Transverse colon (tissue), 4 donors: ENCODE measurements at regions of chr3 and their contacts with region 1.

Region 1: DNA sequence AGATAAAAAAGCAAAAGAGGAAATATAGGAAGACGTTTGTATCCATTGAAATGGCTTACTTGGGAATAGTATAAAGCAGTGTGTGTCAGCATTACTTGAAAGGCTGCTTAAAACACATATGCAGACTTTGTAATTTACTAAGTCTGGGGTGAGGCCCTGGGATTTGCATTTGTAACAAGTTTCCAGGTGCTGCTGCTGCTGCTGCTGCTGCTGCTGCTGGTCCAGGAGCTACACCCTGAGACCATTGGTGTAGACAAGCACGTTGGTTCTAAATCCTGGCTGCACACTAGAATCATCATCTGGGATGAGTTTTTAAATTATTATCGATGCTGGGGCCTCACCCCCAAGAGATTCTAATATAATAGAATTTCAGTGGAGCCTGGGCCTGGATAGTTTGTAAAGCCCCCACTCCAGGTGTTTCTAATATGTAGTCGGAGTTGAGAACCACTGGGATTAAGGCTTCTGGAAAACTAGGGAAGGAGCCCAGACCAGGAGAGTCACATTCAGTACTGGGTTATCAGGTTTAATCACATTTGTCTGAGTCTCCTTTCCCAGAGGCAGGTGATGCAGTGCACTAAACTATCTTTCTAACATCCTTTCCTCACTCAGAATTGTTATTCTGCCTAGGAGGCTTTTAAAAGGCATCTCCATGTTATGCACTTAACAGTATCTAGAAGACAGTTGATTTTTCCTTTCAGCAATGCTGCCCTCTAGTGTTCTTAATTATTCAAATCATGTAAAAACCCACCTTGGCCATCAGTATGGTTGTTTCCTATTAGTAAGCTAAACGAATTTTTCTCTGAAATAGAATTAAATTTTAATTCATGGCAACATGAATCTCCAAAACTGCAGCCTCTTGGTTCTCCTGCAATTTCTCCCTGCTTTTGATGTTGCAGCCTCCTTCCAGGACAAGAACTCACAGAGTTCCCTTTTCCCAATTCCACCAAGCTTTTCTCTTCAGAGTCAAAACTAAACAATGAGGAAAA is 45.4 kb downstream of the SSR3 start:
- DNase-seq: no peak
- H3K4me3 ChIP-seq: no peak overlapping the region
- H3K27ac ChIP-seq: no peak overlapping the region
- H3K4me1 ChIP-seq: peaks cover 0 to 5% (median 0%) of the 10 kb centered on the region in 4 donors
- H3K27me3 ChIP-seq: no peaks in the 10 kb centered on the region
- CTCF ChIP-seq: peak; percentile 56 to 71 (median 67)
- EP300 ChIP-seq: no peak
- POLR2A ChIP-seq: no peak

Region 2: GRCh38 chr3:155352900-155353490 is 1156.5 kb before region 1 on chr3:
- in situ Hi-C with region 1: no loop called
- intact Hi-C with region 1: no loop called
- DNase-seq: no peak
- H3K4me3 ChIP-seq: no peak overlapping the region
- H3K27ac ChIP-seq: no peak overlapping the region
- H3K4me1 ChIP-seq: no peaks in the 10 kb centered on the region
- H3K27me3 ChIP-seq: no peaks in the 10 kb centered on the region
- CTCF ChIP-seq: peak; percentile 34 to 50 (median 38)
- EP300 ChIP-seq: no peak
- POLR2A ChIP-seq: no peak

Region 3: DNA sequence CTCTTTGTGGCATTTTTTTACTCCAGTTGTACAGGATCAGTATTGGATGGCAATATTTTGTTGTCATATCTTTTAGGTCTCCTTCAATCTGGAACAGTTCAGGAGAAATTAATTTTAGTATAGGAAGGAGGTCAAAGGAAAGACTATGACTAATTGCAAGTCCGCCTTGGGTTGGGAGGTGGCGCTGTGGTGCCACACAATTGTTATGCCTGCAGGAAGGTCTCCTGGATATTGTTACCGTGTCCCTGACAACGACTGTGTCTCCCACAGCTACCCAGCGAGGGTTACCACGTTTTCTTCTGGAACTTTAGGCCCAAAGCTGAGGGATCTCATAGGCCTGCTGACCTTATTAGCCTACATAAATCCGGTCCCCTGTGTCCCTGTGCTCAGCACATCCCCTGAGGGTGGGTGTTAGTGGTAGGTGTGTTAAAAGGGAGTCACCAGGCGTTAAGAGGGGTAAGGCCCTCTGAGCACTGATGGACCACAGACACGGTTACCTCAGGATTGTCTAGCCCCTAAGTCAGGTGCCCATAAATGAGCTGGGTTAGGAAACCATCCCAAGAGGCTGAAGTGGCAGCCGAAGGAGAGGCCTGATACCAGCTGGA is 357.6 kb before region 1 on chr3:
- in situ Hi-C with region 1: loop called (anchors 10 to 25 kb)
- intact Hi-C with region 1: loop called (anchors 1 kb)
- DNase-seq: peak; percentile 73
- H3K4me3 ChIP-seq: no peak overlapping the region
- H3K27ac ChIP-seq: peak overlapping the region in 1 of 4 donors; percentile 14
- H3K4me1 ChIP-seq: peaks cover 0 to 11% (median 3%) of the 10 kb centered on the region in 4 donors
- H3K27me3 ChIP-seq: no peaks in the 10 kb centered on the region
- CTCF ChIP-seq: peak; percentile 67 to 77 (median 73)
- EP300 ChIP-seq: no peak
- POLR2A ChIP-seq: no peak

Region 4: GRCh38 chr3:156174229-156174847 is 335.1 kb before region 1 on chr3:
- in situ Hi-C with region 1: loop called in 1 of 4 experiments (anchors 25 kb)
- intact Hi-C with region 1: loop called (anchors 5 kb)
- DNase-seq: no peak
- H3K4me3 ChIP-seq: no peak overlapping the region
- H3K27ac ChIP-seq: no peak overlapping the region
- H3K4me1 ChIP-seq: no peaks in the 10 kb centered on the region
- H3K27me3 ChIP-seq: no peaks in the 10 kb centered on the region
- CTCF ChIP-seq: peak in 3 of 5 experiments; percentile 7 to 26 (median 15)
- EP300 ChIP-seq: no peak
- POLR2A ChIP-seq: no peak